Activated CD4-positive, alpha-beta T cell treated with anti-CD3 and anti-CD28 coated beads, Interleukin-2, amount 10 ng/mL, durations not matched to agents 24 days and 14 days (primary cell): ENCODE measurements at regions of chr11 and their contacts with region 1.

Region 1: DNA sequence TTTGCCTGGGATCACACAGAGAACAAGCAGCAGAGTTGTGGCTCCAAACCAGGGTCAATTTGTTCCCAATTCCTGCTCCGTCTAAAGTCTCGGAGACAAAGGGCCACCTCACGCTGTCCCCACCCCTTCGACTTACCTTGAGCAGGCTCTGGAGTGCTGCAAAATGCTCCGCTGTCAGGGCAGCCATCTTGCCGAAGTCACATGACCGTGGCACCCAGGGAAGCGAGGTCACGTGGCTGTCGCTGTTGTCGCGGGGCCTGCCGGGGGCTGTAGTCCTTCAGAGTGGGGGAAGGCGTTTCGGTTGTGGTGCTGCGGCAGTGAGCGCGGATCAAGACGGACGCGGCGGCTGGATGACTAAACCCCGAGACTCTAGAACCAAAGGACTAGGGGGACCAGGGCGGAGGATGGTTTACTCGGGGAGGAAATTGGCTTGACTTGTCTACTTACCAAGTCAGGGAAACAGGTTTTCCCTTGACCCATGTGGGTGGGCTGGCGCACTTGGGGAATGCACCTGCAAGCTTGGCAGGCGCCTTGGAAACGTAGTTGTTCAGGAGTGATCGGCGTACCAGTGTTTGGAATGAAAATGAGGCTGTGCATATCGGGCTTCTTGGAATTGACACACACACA is at the start of gene COMMD9:
- DNase-seq: peak; percentile 98
- H3K4me3 Mint-ChIP-seq: peak within 1 kb of the TSS; percentile 91
- H3K27ac Mint-ChIP-seq: peak within 1 kb of the TSS; percentile 87
- H3K4me1 Mint-ChIP-seq: peaks cover 26% of the 10 kb centered on the region
- H3K27me3 Mint-ChIP-seq: no peaks in the 10 kb centered on the region
- total RNA-seq, gene COMMD9: 39.0 and 42.3 TPM in 2 replicates

Region 2: GRCh38 chr11:36478700-36479329 is 189.5 kb after region 1 on chr11:
- intact Hi-C with region 1: loop called (anchors 1 kb)
- DNase-seq: peak; percentile 82
- H3K4me3 Mint-ChIP-seq: no peak overlapping the region
- H3K27ac Mint-ChIP-seq: no peak overlapping the region
- H3K4me1 Mint-ChIP-seq: peaks cover 10% of the 10 kb centered on the region
- H3K27me3 Mint-ChIP-seq: no peaks in the 10 kb centered on the region

Region 3: DNA sequence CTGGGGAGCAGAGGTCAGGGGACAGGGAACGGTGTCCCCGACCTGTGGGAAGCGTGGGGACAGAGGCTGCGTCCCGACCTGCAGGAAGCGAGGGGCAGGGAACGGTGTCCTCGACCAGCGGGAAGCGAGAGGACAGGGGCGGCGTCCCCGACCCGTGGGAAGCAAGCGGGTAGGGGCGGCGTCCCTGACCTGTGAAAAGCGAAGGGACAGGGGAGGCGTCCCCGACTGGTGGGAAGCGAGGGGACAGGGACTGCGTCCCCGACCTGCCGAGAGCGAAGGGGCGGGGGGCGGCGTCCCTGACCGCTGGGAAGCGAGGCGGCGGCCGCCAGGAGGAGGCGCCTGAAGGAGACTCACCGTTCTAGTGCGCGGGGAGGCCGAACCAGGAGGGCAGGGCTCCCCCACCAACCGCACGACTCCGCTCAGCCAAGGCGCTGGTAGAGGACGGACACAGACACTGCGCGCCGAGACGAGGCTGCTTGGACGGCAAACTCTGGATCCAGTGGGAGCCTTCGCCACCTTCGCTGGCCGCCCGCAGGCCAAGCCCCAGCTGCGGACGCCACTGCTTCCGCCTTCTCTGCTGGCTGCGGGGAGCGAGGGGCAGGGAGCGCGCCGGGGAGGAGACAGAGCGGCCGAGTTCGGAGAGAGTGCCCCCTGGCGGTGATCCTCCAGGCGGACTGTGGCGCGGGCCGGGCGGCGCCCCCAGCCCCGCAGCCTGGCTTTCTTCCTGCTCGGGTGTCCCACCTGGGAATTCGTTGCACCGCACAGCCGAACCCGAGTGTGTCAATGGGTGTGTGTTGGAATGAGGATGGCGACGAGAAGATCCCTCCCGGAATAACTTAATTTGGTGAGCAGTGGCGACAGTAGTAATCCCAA is 220.6 kb after region 1 on chr11 and contains the start of gene TRAF6:
- intact Hi-C with region 1: loop called (anchors 1 kb)
- DNase-seq: peak; percentile 97
- H3K4me3 Mint-ChIP-seq: peak within 1 kb of the TSS; percentile 98
- H3K27ac Mint-ChIP-seq: peak within 1 kb of the TSS; percentile 90
- H3K4me1 Mint-ChIP-seq: peaks cover 20% of the 10 kb centered on the region
- H3K27me3 Mint-ChIP-seq: peaks cover 22% of the 10 kb centered on the region
- total RNA-seq, gene TRAF6: 10.9 and 11.5 TPM in 2 replicates

Region 4: GRCh38 chr11:36672813-36673450 is 383.6 kb after region 1 on chr11:
- intact Hi-C with region 1: loop called (anchors 2 kb)
- DNase-seq: peak; percentile 72
- H3K4me3 Mint-ChIP-seq: no peak overlapping the region
- H3K27ac Mint-ChIP-seq: no peak overlapping the region
- H3K4me1 Mint-ChIP-seq: no peaks in the 10 kb centered on the region
- H3K27me3 Mint-ChIP-seq: peaks cover 2% of the 10 kb centered on the region